ENCODE measurements at regions of chr1 and their contacts with region 1.

Region 1: GRCh38 chr1:161738627-161739287 is 10.8 kb upstream of the DUSP12 start:
- DNase-seq: peak; percentile 76
- ATAC-seq: peak; percentile 73
- H3K4me3 ChIP-seq: no peak overlapping the region
- H3K27ac ChIP-seq: no peak overlapping the region
- H3K4me1 ChIP-seq: peaks cover 0 to 24% of the 10 kb centered on the region in 2 experiments; a peak in 2 of 4 replicates
- H3K27me3 ChIP-seq: no peaks in the 10 kb centered on the region
- CTCF ChIP-seq: peak; percentile 49 to 90 (median 64); a peak in 5 of 6 replicates
- POLR2A ChIP-seq: no peak
- RAD21 ChIP-seq: peak; percentile 96

Region 2: DNA sequence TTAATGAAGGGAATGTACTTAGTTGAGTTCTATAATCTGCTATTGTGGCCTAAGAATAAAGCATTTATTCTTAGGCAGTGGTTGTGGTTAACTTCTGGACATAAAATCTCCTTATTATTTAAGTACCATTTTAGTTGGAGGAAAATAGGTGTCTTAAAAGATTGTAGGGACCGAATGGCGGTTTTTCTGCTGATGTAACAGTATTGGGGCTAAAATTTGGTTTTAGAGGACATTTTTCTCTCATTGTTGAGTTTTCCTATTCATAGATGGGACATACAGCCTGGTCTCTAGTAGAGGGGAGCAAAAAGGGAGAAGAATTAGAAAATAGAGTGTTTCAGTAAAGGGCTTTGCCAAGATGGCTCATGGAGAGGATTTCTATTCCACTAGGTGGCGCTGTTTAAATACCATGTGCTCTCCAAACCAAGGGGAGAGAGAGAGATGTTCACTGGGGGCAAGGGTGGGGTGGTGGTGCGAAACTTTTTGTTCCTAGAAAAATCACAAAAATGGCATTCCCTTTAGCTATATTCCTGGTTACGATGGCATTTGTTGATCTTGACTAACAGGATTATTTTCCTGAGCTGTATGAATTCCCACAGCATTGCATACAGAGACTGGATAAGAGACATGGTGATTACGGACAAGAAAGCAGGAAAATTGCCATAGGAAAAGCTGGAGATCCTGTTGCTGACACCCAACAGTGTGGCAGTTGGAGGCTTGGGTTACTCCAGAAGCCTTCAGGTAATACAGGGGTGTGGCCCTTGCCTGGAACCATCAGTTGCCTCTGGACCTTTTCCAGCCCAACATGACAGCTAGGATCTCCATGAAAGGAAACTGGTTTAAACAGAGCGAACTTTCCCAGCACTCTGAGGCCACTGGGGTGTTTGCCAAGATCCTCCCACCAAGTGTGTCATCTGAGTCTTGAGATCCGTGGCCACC is 251.7 kb before region 1 on chr1:
- CTCF ChIA-PET with region 1: interaction called, 18 read pairs
- POLR2A ChIA-PET with region 1: no interaction called
- RAD21 ChIA-PET with region 1: interaction called in 1 of 2 experiments, 5 read pairs
- intact Hi-C with region 1: loop called (anchors 1 kb)
- DNase-seq: peak; percentile 64
- ATAC-seq: peak; percentile 80
- H3K4me3 ChIP-seq: no peak overlapping the region
- H3K27ac ChIP-seq: no peak overlapping the region
- H3K4me1 ChIP-seq: no peaks in the 10 kb centered on the region
- H3K27me3 ChIP-seq: no peaks in the 10 kb centered on the region
- CTCF ChIP-seq: peak; percentile 67 to 88 (median 87)
- POLR2A ChIP-seq: no peak
- RAD21 ChIP-seq: peak; percentile 87

Region 3: DNA sequence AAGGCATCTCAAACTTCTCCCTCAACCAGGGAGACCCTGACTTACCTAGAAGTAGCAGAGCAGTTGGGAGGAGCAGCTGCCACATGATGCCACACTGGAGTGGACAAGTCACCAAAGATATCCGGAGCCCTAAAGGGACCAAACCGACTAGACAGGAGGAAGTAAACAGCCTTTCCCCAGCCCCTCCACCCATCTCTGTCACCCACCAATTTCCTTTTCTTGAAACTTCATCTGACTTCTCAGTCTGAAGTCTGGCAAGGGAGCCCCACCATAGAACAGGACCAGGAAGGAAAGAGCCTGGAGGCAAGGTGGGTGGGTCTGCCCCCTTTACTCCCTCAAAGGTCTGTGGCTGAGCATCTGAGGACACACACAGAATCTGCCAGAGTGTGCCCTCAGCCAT is 189.1 kb before region 1 on chr1 and contains the start of gene FCGR3A:
- CTCF ChIA-PET with region 1: no interaction called
- POLR2A ChIA-PET with region 1: no interaction called
- RAD21 ChIA-PET with region 1: no interaction called
- intact Hi-C with region 1: loop called (anchors 5 kb)
- DNase-seq: no peak
- ATAC-seq: no peak
- H3K4me3 ChIP-seq: no peak within 1 kb of the TSS
- H3K27ac ChIP-seq: no peak within 1 kb of the TSS
- H3K4me1 ChIP-seq: no peaks in the 10 kb centered on the region
- H3K27me3 ChIP-seq: no peaks in the 10 kb centered on the region
- CTCF ChIP-seq: no peak
- POLR2A ChIP-seq: no peak
- RAD21 ChIP-seq: no peak
- total RNA-seq, gene FCGR3A: 0.17 TPM

Region 4: GRCh38 chr1:161691846-161692245 is 46.9 kb before region 1 on chr1:
- CTCF ChIA-PET with region 1: no interaction called
- POLR2A ChIA-PET with region 1: no interaction called
- RAD21 ChIA-PET with region 1: no interaction called
- intact Hi-C with region 1: no loop called
- DNase-seq: no peak
- ATAC-seq: no peak
- H3K4me3 ChIP-seq: no peak overlapping the region
- H3K27ac ChIP-seq: no peak overlapping the region
- H3K4me1 ChIP-seq: no peaks in the 10 kb centered on the region
- H3K27me3 ChIP-seq: no peaks in the 10 kb centered on the region
- CTCF ChIP-seq: no peak
- POLR2A ChIP-seq: no peak
- RAD21 ChIP-seq: no peak

Region 5: GRCh38 chr1:161749509-161750407 is 11.0 kb after region 1 on chr1 and contains the start of gene DUSP12:
- CTCF ChIA-PET with region 1: interaction called, 16 read pairs
- POLR2A ChIA-PET with region 1: interaction called, 8 read pairs
- RAD21 ChIA-PET with region 1: no interaction called
- intact Hi-C with region 1: no loop called
- DNase-seq: peak; percentile 90
- ATAC-seq: peak; percentile 93
- H3K4me3 ChIP-seq: peak within 1 kb of the TSS; percentile 90 to 92
- H3K27ac ChIP-seq: peak within 1 kb of the TSS; percentile 78
- H3K4me1 ChIP-seq: peaks cover 8 to 16% of the 10 kb centered on the region in 2 experiments; a peak in 3 of 4 replicates
- H3K27me3 ChIP-seq: no peaks in the 10 kb centered on the region
- CTCF ChIP-seq: 0 out of 6 replicates have a peak, but pooled peaks of 2 of the 3 experiments have one; percentile 1 to 10
- POLR2A ChIP-seq: peak; percentile 80
- RAD21 ChIP-seq: no peak
- total RNA-seq, gene DUSP12: 31.6 TPM

Region 6: DNA sequence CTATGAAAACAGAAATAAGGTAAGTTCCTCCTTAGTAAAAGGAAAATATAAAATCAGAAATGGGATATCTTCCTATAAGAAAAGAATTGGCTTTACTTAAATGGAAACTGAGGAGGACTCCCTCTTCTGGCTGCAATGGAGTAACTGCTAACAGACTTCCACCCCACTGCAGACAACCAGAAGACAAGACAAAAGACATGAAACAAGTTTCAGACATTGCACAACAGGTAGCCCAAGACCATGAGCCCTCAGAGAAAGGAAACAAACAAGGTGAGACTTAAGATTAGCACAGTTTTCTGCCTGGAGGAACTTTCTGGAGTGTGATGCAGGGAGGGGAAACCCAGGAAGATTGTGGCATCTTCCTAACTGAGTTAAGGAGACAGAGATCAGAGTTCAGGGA is 301.9 kb after region 1 on chr1:
- CTCF ChIA-PET with region 1: interaction called, 12 read pairs
- POLR2A ChIA-PET with region 1: no interaction called
- RAD21 ChIA-PET with region 1: interaction called in 1 of 2 experiments, 4 read pairs
- intact Hi-C with region 1: no loop called
- DNase-seq: peak; percentile 34
- ATAC-seq: peak; percentile 68
- H3K4me3 ChIP-seq: no peak overlapping the region
- H3K27ac ChIP-seq: no peak overlapping the region
- H3K4me1 ChIP-seq: peaks cover 6 to 16% of the 10 kb centered on the region in 2 experiments
- H3K27me3 ChIP-seq: no peaks in the 10 kb centered on the region
- CTCF ChIP-seq: peak; percentile 50 to 72 (median 67); a peak in 5 of 6 replicates
- POLR2A ChIP-seq: no peak
- RAD21 ChIP-seq: peak; percentile 39